Colonic mucosa (tissue), 4 donors: ENCODE measurements at regions of chr11 and their contacts with region 1.

Region 1: DNA sequence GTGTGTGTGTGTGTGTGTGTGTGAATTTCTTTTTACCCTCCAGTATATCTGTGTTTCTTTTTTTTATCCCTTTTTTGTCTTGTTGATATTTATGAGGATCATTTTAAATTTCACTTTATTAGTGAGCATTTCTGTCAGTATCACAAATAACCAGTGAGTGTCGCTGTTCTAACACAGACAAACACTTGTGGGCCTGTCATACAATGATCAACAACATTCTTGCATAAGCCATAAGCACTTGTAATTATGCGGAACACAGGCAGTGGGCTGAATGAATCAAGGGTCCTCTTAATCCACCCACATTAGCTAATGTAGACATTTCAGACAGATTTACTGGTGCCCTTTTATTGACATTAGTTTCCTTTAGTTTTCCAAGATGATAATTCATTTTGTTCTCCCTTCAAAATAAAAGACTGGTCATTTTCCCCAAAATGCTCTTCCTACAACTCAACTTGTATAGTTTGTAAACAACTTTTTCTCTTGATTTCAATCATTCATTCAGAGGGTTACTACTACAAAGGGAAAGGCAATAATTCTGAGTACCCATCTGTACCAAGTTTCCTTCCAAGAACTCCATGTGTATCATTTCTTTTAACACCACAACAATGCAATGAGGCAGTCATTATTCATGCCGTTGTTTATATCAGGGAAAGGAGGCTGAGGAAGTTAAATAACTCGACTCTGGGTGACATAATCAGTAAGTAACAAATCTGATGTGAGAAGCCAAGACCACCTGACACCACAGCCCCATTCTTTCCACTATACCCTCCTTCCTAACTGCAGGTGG is 34.5 kb upstream of the ANO3 start:
- DNase-seq: no peak
- H3K4me3 ChIP-seq: no peak overlapping the region
- H3K27ac ChIP-seq: no peak overlapping the region
- H3K4me1 ChIP-seq: no peaks in the 10 kb centered on the region
- H3K27me3 ChIP-seq: no peaks in the 10 kb centered on the region
- CTCF ChIP-seq: peak; percentile 53

Region 2: DNA sequence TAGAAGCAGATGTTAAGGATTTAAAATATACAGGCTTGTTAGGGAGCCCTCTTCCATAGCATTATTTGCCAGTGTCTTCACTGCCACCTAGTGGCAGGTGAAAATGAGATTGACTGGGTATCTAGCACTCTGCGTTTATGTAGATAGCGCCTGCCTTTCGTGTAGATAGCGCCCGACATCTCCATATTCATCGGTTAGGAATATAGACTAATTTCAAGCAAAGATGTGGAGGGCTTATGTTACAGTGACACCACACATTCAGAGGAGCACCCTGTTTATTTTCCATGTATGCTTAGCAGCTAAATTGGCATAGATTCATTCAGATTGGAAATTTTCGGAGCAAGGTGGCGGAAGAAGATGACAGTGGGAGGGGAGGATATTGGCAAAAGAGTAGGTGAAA is 352.5 kb after region 1 on chr11:
- intact Hi-C with region 1: loop called (anchors 5 kb)
- DNase-seq: peak; percentile 75
- H3K4me3 ChIP-seq: no peak overlapping the region
- H3K27ac ChIP-seq: no peak overlapping the region
- H3K4me1 ChIP-seq: no peaks in the 10 kb centered on the region
- H3K27me3 ChIP-seq: no peaks in the 10 kb centered on the region
- CTCF ChIP-seq: peak; percentile 46

Region 3: DNA sequence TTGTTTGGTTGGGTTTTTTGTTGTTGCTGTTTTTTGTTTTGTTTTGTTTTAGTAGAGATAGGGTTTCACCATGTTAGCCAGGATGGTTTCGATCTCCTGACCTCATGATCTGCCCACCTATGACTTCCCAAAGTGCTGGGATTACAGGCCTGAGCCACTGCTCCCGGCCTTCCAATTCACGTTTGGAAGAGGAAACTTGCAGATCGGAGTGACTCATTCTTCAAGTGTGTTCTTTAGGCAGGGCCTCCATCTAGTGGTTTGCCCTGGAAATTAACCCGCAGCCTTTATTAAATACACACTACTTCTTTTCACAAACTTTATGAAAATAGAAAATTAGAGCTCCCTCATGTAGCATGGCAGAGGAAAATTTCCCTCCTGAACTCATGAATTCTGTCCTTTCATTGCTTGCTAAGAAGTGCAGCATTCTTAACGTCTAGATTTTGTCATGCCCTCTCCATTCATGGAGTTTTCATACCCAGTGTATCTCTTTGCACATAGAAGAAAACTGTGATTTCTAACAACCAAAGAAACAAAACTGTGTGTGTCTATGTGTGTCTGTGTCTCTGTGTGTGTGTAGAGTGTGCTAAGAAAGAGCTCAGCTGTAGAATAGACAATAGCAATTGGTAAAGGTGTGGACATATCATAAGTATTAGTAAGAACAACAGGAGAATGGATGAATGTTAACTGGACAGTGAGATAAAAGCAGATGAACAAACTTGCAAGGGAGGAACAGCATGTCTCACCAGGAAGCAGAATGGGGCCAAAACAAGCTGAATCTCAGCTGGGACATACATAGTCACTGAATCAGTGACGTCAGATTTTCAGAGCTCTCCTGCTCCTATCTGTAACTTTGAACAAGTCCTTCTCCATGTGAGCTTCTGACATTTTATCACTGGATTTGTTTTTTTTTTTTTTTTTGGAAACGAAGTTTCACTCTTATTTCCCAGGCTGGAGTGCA is 861.6 kb after region 1 on chr11:
- intact Hi-C with region 1: loop called (anchors 5 kb)
- DNase-seq: peak; percentile 61
- H3K4me3 ChIP-seq: no peak overlapping the region
- H3K27ac ChIP-seq: no peak overlapping the region
- H3K4me1 ChIP-seq: no peaks in the 10 kb centered on the region
- H3K27me3 ChIP-seq: no peaks in the 10 kb centered on the region
- CTCF ChIP-seq: peak; percentile 75